Kidney (tissue), 22 donors: ENCODE measurements at regions of chr6 and their contacts with region 1.

Region 1: GRCh38 chr6:53492860-53493634 is 51.9 kb downstream of the GCLC start:
- DNase-seq: peak in 2 of 5 donors; percentile 77 to 83
- H3K4me3 ChIP-seq: peak overlapping the region in 1 of 3 donors; percentile 33
- H3K27ac ChIP-seq: no peak overlapping the region
- H3K4me1 ChIP-seq: no peaks in the 10 kb centered on the region
- H3K27me3 ChIP-seq: no peaks in the 10 kb centered on the region
- CTCF ChIP-seq: peak; percentile 57

Region 2: DNA sequence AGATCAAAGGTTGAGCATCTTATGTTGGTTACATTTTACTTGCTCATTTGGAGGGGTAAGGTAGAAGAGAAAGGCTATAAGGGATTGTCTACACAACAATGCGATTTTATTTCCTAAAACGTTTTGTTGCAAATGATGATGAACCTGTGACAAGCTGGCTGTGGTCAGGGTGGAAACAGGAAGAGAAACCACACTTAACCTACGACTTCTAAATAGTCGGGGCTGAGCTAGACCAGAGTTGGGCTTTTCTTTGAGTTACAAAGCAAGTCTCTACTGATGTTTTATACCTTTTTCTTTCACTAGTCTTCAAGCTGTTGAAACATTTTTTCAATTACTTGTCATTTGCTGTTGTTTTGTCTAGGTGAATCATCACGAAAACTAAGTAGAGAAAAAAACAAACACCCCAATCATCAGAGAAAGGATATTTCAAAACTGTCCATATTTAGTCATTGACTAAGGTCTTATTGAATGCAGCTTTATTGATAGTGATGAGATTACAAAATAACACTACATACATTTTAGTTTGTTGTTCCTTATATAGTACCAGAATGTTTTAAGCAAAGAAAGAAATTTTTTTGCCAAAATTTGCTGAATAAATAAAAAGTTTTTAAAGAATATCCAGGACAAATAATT is 154.5 kb after region 1 on chr6:
- intact Hi-C with region 1: loop called (anchors 10 kb)
- DNase-seq: peak in 1 of 5 donors; percentile 4
- H3K4me3 ChIP-seq: no peak overlapping the region
- H3K27ac ChIP-seq: no peak overlapping the region
- H3K4me1 ChIP-seq: peaks cover 0 to 8% (median 0%) of the 10 kb centered on the region in 3 donors
- H3K27me3 ChIP-seq: no peaks in the 10 kb centered on the region
- CTCF ChIP-seq: no peak

Region 3: GRCh38 chr6:53701333-53702218 is 208.5 kb after region 1 on chr6:
- intact Hi-C with region 1: no loop called
- DNase-seq: no peak
- H3K4me3 ChIP-seq: no peak overlapping the region
- H3K27ac ChIP-seq: no peak overlapping the region
- H3K4me1 ChIP-seq: no peaks in the 10 kb centered on the region
- H3K27me3 ChIP-seq: no peaks in the 10 kb centered on the region
- CTCF ChIP-seq: no peak

Region 4: GRCh38 chr6:53725791-53726431 is 232.9 kb after region 1 on chr6:
- intact Hi-C with region 1: loop called (anchors 5 kb)
- DNase-seq: peak; percentile 77 to 90 (median 83)
- H3K4me3 ChIP-seq: no peak overlapping the region
- H3K27ac ChIP-seq: no peak overlapping the region
- H3K4me1 ChIP-seq: peaks cover 0 to 2% (median 0%) of the 10 kb centered on the region in 3 donors
- H3K27me3 ChIP-seq: no peaks in the 10 kb centered on the region
- CTCF ChIP-seq: peak; percentile 98